Naive thymus-derived CD4-positive, alpha-beta T cell (primary cell): ENCODE measurements at regions of chr16 and their contacts with region 1.

Region 1: GRCh38 chr16:3457434-3458252 is 14.2 kb downstream of the NAA60 start:
- DNase-seq: peak; percentile 87 to 95 (median 93)
- ATAC-seq: peak; percentile 96
- H3K4me3 ChIP-seq: peak overlapping the region; percentile 84
- H3K4me3 Mint-ChIP-seq: peak overlapping the region; percentile 78 to 88 (median 86)
- H3K27ac ChIP-seq: peak overlapping the region; percentile 96
- H3K27ac Mint-ChIP-seq: peak overlapping the region; percentile 74 to 94 (median 88)
- H3K4me1 ChIP-seq: peaks cover 37 to 45% of the 10 kb centered on the region in 2 donors
- H3K4me1 Mint-ChIP-seq: peaks cover 33 to 57% (median 48%) of the 10 kb centered on the region in 7 donors
- H3K27me3 ChIP-seq: no peaks in the 10 kb centered on the region
- H3K27me3 Mint-ChIP-seq: no peaks in the 10 kb centered on the region

Region 2: GRCh38 chr16:3003582-3004302 is 453.9 kb before region 1 on chr16:
- CTCF ChIA-PET with region 1: no interaction called
- POLR2A ChIA-PET with region 1: no interaction called
- intact Hi-C with region 1: loop called in 1 of 2 experiments (anchors 1 kb)
- DNase-seq: peak; percentile 78 to 98 (median 96)
- ATAC-seq: peak; percentile 99
- H3K4me3 ChIP-seq: no peak overlapping the region
- H3K4me3 Mint-ChIP-seq: peak overlapping the region; percentile 76 to 82 (median 80)
- H3K27ac ChIP-seq: no peak overlapping the region
- H3K27ac Mint-ChIP-seq: peak overlapping the region in 5 of 9 donors; percentile 41 to 81 (median 45)
- H3K4me1 ChIP-seq: peaks cover 19 to 21% of the 10 kb centered on the region in 2 donors
- H3K4me1 Mint-ChIP-seq: peaks cover 18 to 32% (median 25%) of the 10 kb centered on the region in 7 donors
- H3K27me3 ChIP-seq: no peaks in the 10 kb centered on the region
- H3K27me3 Mint-ChIP-seq: peaks cover 0 to 17% (median 0%) of the 10 kb centered on the region in 5 donors

Region 3: GRCh38 chr16:3165111-3165822 is 292.4 kb before region 1 on chr16:
- CTCF ChIA-PET with region 1: no interaction called
- POLR2A ChIA-PET with region 1: interaction called, 3 read pairs
- intact Hi-C with region 1: loop called in 1 of 2 experiments (anchors 5 kb)
- DNase-seq: no peak
- ATAC-seq: no peak
- H3K4me3 ChIP-seq: no peak overlapping the region
- H3K4me3 Mint-ChIP-seq: peak overlapping the region; percentile 39 to 80 (median 58)
- H3K27ac ChIP-seq: peak overlapping the region; percentile 55
- H3K27ac Mint-ChIP-seq: peak overlapping the region; percentile 36 to 93 (median 71)
- H3K4me1 ChIP-seq: peaks cover under 1 to 4% of the 10 kb centered on the region in 2 donors
- H3K4me1 Mint-ChIP-seq: peaks cover 9 to 24% (median 10%) of the 10 kb centered on the region in 7 donors
- H3K27me3 ChIP-seq: no peaks in the 10 kb centered on the region
- H3K27me3 Mint-ChIP-seq: peaks cover 0 to 27% (median 0%) of the 10 kb centered on the region in 5 donors

Region 4: DNA sequence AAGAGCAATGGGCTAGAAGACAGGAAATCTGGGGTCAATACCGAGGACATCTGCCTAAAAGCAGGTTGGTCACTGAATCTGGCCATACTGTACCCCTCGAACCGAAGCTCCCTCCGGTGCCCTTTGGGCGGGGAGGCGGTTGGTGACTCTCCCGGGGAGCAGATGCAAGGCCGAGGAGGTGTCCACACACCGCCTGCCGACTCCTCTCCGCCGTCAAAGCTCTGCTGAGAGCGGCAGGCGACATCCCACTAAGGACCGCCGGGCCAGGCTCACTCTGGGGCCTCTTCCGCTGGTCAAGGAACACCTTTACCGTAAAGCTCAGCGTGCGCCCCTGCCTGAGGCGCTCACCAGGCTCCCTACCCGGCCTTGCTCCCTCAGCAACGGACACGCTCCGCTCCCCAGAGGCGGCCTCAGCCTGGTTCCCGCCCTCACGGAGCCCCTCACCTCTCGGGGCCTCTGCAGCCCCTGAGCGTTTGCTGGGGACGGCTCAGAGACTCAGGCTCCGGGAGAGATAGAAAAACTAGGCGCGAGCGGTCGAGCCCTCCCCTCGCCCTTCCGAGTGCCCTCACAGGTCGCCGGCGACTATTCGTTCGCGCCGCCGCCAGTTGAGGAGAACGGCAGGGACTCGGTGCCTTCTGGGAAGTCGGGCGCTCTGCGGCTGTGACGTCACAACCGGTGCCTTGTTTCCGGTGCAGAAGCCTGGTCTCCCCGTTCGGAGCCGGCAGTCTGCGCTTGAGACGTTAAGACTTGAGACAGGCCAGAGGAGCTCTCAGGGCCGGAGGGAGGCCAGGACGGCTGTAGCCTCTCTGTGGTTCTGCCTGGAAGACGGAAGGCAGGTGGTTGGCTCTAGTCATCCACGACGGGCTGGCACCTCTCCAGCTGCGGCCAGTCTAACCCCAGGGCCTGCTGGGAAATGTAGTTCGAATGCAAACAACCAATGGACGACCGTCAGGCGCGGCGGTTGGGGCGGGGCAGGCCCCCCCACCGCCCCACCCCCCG is 222.8 kb before region 1 on chr16 and contains the start of gene ZNF200:
- CTCF ChIA-PET with region 1: no interaction called
- POLR2A ChIA-PET with region 1: no interaction called
- intact Hi-C with region 1: loop called in 1 of 2 experiments (anchors 5 kb)
- DNase-seq: peak; percentile 85 to 96 (median 94)
- ATAC-seq: peak; percentile 94
- H3K4me3 ChIP-seq: peak within 1 kb of the TSS; percentile 98
- H3K4me3 Mint-ChIP-seq: peak within 1 kb of the TSS; percentile 88 to 97 (median 94)
- H3K27ac ChIP-seq: peak within 1 kb of the TSS; percentile 90
- H3K27ac Mint-ChIP-seq: peak within 1 kb of the TSS; percentile 93 to 98 (median 97)
- H3K4me1 ChIP-seq: peaks cover 18 to 23% of the 10 kb centered on the region in 2 donors
- H3K4me1 Mint-ChIP-seq: peaks cover 20 to 48% (median 39%) of the 10 kb centered on the region in 7 donors
- H3K27me3 ChIP-seq: no peaks in the 10 kb centered on the region
- H3K27me3 Mint-ChIP-seq: peaks cover 0 to 3% (median 0%) of the 10 kb centered on the region in 5 donors
- total RNA-seq, gene ZNF200: 4.8 to 33.3 (median 16.6) TPM

Region 5: DNA sequence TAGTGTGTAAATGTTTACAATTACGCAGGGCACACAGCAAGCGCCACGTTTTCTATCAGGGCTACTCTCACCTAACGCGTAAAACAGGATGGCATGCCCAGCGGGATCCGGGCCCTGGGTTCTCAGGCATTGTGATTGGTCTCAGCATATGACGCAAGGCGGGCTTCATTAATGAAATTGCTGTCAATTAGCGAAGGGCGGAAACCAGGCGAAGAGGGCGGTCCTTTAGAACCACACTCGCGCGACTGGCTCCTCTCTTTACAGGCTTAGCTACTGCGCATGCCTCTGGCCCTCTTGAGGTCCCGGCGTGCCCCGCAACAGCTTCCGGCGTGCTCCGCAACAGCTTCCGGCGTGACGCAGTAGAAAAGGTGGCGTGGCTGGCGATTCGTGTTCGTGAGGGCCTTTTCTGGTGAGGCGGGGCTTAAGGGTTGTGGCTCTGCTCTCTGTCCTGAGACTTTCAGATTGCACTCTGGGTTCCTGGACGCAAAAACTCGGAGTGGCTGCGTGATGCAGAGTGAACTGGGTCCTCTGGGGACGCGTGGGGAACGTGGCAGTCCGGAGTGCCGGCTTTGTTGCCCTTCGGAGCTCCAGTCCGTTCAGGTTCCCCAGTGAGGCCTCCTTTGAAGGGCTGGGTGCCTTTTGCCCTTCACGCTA is 92.7 kb before region 1 on chr16:
- CTCF ChIA-PET with region 1: no interaction called
- POLR2A ChIA-PET with region 1: interaction called, 5 read pairs
- intact Hi-C with region 1: loop called in 1 of 2 experiments (anchors 2 kb)
- DNase-seq: peak; percentile 50 to 92 (median 87)
- ATAC-seq: peak; percentile 93
- H3K4me3 ChIP-seq: peak overlapping the region; percentile 70
- H3K4me3 Mint-ChIP-seq: peak overlapping the region; percentile 37 to 92 (median 84)
- H3K27ac ChIP-seq: peak overlapping the region; percentile 79
- H3K27ac Mint-ChIP-seq: peak overlapping the region; percentile 73 to 96 (median 91)
- H3K4me1 ChIP-seq: peaks cover 0 to 6% of the 10 kb centered on the region in 2 donors
- H3K4me1 Mint-ChIP-seq: peaks cover 0 to 19% (median 12%) of the 10 kb centered on the region in 7 donors
- H3K27me3 ChIP-seq: no peaks in the 10 kb centered on the region
- H3K27me3 Mint-ChIP-seq: peaks cover 0 to 30% (median 21%) of the 10 kb centered on the region in 5 donors

Region 6: DNA sequence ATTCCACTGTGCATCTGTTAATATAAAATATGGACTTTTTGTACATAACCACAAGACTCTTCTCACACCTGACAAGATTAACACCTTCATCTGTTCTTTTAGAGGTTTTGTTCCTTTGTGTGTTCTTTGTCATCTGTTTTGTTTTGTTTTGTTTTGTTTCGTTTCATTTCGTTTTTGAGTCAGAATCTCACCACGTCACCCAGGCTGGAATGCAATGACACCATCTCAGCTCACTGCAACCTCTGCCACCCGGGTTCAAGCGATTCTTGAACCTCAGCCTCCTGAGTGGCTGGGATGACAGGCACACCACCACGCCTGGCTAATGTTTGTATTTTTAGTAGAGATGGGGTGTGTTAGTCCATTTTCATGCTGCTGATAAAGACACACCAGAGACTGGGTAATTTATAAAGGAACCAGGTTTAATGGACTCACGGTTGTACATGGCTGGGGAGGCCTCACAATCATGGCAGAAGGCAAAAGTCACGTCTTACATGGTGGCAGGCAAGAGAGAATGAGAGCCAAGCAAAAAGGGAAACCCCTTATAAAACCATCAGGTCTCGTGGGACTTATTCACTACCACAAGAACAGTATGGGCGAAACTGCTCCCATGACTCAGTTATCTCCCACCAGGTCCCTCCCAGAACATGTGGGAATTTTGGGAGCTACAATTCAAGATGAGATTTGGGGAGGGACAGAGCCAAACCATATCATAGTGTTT is 15.4 kb after region 1 on chr16:
- CTCF ChIA-PET with region 1: no interaction called
- POLR2A ChIA-PET with region 1: no interaction called
- intact Hi-C with region 1: no loop called
- DNase-seq: no peak
- ATAC-seq: no peak
- H3K4me3 ChIP-seq: no peak overlapping the region
- H3K4me3 Mint-ChIP-seq: no peak overlapping the region
- H3K27ac ChIP-seq: no peak overlapping the region
- H3K27ac Mint-ChIP-seq: peak overlapping the region in 6 of 9 donors; percentile 18 to 83 (median 58)
- H3K4me1 ChIP-seq: peaks cover 0 to under 1% of the 10 kb centered on the region in 2 donors
- H3K4me1 Mint-ChIP-seq: peaks cover 13 to 49% (median 34%) of the 10 kb centered on the region in 7 donors
- H3K27me3 ChIP-seq: no peaks in the 10 kb centered on the region
- H3K27me3 Mint-ChIP-seq: no peaks in the 10 kb centered on the region

Region 7: GRCh38 chr16:3503523-3503922 is 45.9 kb after region 1 on chr16:
- CTCF ChIA-PET with region 1: interaction called, 3 read pairs
- POLR2A ChIA-PET with region 1: interaction called, 4 read pairs
- intact Hi-C with region 1: loop called (anchors 1 kb)
- DNase-seq: peak in 8 of 9 donors; percentile 50 to 81 (median 70)
- ATAC-seq: peak; percentile 49
- H3K4me3 ChIP-seq: peak overlapping the region; percentile 3
- H3K4me3 Mint-ChIP-seq: peak overlapping the region; percentile 76 to 94 (median 84)
- H3K27ac ChIP-seq: peak overlapping the region; percentile 92
- H3K27ac Mint-ChIP-seq: peak overlapping the region; percentile 90 to 98 (median 95)
- H3K4me1 ChIP-seq: peaks cover 40 to 47% of the 10 kb centered on the region in 2 donors
- H3K4me1 Mint-ChIP-seq: peaks cover 37 to 80% (median 67%) of the 10 kb centered on the region in 7 donors
- H3K27me3 ChIP-seq: no peaks in the 10 kb centered on the region
- H3K27me3 Mint-ChIP-seq: no peaks in the 10 kb centered on the region